IMR-90 (cell line): ENCODE measurements at regions of chr17 and their contacts with region 1.

Region 1: DNA sequence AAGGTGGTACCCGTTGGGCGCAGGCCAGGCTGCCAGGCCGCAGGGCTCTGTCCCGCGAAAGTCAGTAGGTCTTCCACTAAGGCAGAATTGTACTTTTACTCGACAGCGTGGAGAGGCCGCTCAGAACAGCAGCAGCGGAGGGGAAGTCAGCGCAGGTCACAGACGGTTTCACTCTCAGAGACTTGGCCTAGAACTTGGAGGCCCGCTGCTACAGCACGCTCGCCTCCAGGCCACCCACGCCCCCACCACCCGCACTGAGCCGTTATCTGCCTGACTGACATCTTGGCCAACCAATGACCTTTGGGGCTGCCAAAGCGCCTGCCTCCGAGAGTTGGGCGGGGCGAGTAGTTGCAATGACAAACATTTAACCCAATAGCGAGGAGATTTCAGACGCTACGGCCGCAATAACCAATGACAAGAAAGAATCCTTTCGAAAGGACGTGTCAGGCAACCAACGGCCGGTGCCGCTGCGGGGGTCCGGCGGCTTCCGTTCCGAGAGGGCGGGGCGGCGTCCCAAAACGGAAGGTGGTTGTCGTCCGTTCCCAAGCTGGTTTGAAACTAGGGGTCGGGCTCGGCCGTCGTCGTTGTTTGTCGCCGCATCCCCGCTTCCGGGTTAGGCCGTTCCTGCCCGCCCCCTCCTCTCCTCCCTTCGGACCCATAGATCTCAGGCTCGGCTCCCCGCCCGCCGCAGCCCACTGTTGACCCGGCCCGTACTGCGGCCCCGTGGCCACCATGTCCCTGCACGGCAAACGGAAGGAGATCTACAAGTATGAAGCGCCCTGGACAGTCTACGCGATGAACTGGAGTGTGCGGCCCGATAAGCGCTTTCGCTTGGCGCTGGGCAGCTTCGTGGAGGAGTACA is at the start of gene DCAF7:
- DNase-seq: peak; percentile 100
- ATAC-seq: peak; percentile 96
- H3K4me3 ChIP-seq: peak within 1 kb of the TSS; percentile 80
- H3K27ac ChIP-seq: peak within 1 kb of the TSS; percentile 76
- H3K4me1 ChIP-seq: peaks cover 3% of the 10 kb centered on the region
- H3K27me3 ChIP-seq: no peaks in the 10 kb centered on the region
- CTCF ChIP-seq: peak; percentile 2; the same call in 1 of the 2 replicates
- POLR2A ChIP-seq: peak; percentile 64; the same call in 1 of the 2 replicates
- RAD21 ChIP-seq: no peak
- total RNA-seq, gene DCAF7: 31.4 and 40.9 TPM in 2 replicates

Region 2: GRCh38 chr17:62614142-62614541 is 936.0 kb before region 1 on chr17:
- CTCF ChIA-PET with region 1: no interaction called
- POLR2A ChIA-PET with region 1: interaction called, 16 read pairs
- dilution Hi-C with region 1: no loop called
- in situ Hi-C with region 1: no loop called
- intact Hi-C with region 1: no loop called
- DNase-seq: peak; percentile 92
- ATAC-seq: peak; percentile 86
- H3K4me3 ChIP-seq: no peak overlapping the region
- H3K27ac ChIP-seq: no peak overlapping the region
- H3K4me1 ChIP-seq: peaks cover 6% of the 10 kb centered on the region
- H3K27me3 ChIP-seq: no peaks in the 10 kb centered on the region
- CTCF ChIP-seq: no peak
- POLR2A ChIP-seq: no peak
- RAD21 ChIP-seq: no peak

Region 3: DNA sequence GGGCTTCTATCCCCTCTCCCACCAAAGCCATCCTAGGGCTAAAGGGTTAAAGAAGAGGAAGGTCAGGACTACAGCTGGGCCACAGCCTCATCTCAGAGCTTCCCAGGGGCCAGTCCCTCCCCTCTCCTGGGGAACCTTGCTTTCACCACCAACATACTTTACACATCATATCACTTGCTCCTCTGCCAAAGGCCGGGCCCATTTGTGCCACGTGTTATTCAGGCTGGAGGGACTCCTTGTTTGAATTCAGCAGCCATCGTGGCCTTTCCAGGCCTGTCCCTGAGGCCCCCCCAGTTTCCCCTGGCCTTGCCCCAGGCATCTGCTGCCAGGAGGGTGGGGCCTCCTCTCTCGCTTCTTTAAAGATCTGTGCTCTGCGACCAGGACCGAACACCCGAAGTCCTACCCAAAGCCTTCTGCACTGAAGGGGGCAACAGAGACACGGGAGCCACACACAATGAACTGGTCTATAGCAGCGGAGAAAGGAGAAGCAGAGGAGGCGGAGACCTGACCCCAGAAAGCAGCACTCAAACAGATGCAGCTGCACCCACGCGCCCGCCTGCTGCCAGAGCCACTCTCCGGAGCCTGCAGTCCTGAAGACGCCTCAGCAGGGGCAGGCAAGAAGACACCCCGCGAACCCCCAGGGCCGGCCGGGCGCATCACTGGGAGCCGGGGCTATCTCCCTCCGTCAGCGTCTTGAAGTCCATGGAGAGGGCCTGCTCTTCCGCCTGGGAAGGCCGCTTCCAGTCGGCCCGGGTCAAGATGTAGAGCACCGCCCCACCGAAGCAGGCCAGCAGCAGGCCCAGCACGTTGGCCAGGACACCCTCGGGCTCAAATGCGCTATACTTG is 116.2 kb before region 1 on chr17:
- CTCF ChIA-PET with region 1: no interaction called
- POLR2A ChIA-PET with region 1: no interaction called
- dilution Hi-C with region 1: no loop called
- in situ Hi-C with region 1: no loop called
- intact Hi-C with region 1: loop called (anchors 2 kb)
- DNase-seq: peak; percentile 92
- ATAC-seq: peak; percentile 79
- H3K4me3 ChIP-seq: no peak overlapping the region
- H3K27ac ChIP-seq: peak overlapping the region; percentile 61
- H3K4me1 ChIP-seq: peaks cover 28% of the 10 kb centered on the region
- H3K27me3 ChIP-seq: no peaks in the 10 kb centered on the region
- CTCF ChIP-seq: no peak
- POLR2A ChIP-seq: no peak
- RAD21 ChIP-seq: no peak